Calu3 (cell line): ENCODE measurements at regions of chr3 and their contacts with region 1.

Region 1: GRCh38 chr3:139460076-139460475 is 16.2 kb downstream of the RBP2 start:
- DNase-seq: no peak
- H3K4me3 Mint-ChIP-seq: no peak overlapping the region
- H3K27ac Mint-ChIP-seq: no peak overlapping the region
- H3K4me1 Mint-ChIP-seq: peaks cover 37% of the 10 kb centered on the region
- H3K27me3 Mint-ChIP-seq: no peaks in the 10 kb centered on the region
- CTCF ChIP-seq: no peak

Region 2: DNA sequence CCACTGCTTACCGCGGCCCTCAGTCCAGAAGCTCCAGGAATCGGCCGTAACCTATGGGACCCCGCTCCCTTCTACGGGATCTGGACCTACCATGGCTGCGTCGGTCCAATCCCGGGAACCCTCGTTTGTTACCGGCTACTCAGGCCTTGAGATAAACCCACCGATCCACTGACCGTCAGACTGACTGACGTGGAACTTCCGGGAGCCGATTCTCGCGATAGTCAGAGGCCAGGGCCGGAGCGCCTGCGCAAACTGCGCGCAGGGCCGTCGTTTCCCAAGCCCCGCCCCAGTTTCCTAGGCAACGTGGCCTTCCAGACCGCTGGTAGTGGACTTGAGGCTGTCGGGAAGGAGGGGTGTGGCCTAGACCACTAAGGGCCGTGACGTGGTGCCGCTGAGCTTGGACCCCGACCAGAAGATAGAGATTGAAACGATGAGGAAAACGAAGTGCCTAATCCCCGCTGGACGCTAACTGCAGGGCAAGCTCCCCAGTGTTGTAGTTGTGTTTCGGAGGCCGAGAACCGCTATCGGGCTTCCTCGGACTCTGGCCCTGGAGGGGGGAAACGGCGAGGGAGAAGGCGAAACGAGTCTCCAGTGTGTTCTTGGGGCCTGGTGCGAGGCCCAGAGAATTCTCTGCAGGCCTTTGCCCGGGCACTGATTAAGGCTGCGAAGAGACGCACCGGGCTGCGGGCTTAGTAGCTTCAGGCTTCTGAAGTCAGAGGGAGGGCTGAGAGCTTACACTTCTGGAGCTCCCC is 70.4 kb before region 1 on chr3 and contains the start of gene COPB2:
- CTCF ChIA-PET with region 1: no interaction called
- intact Hi-C with region 1: loop called (anchors 5 kb)
- DNase-seq: peak; percentile 100
- H3K4me3 Mint-ChIP-seq: peak within 1 kb of the TSS; percentile 84
- H3K27ac Mint-ChIP-seq: peak within 1 kb of the TSS; percentile 97
- H3K4me1 Mint-ChIP-seq: peaks cover 24% of the 10 kb centered on the region
- H3K27me3 Mint-ChIP-seq: no peaks in the 10 kb centered on the region
- CTCF ChIP-seq: no peak
- total RNA-seq, gene COPB2: 219 and 223 TPM in 2 replicates

Region 3: DNA sequence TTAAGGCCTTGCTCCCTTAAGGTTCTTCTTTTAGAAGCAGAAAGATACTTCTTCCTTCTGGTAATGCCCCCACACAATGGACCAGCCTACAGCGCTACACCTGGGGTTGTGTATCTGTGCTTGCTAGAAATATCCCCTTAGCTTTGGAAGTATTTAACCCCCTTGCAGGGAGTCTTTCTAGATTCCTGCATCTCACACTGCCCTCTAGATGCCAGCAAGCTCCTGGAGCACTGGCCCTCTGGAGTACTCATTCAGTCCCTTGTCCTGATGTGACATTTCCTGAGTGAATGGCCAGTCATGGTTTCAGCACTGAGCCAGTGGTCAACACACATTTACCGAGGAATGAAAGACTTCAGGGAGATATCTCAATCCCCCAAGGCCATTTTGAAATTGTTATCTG is 46.7 kb after region 1 on chr3:
- CTCF ChIA-PET with region 1: no interaction called
- intact Hi-C with region 1: loop called (anchors 2 kb)
- DNase-seq: peak; percentile 31
- H3K4me3 Mint-ChIP-seq: no peak overlapping the region
- H3K27ac Mint-ChIP-seq: no peak overlapping the region
- H3K4me1 Mint-ChIP-seq: peaks cover 32% of the 10 kb centered on the region
- H3K27me3 Mint-ChIP-seq: no peaks in the 10 kb centered on the region
- CTCF ChIP-seq: peak; percentile 32

Region 4: DNA sequence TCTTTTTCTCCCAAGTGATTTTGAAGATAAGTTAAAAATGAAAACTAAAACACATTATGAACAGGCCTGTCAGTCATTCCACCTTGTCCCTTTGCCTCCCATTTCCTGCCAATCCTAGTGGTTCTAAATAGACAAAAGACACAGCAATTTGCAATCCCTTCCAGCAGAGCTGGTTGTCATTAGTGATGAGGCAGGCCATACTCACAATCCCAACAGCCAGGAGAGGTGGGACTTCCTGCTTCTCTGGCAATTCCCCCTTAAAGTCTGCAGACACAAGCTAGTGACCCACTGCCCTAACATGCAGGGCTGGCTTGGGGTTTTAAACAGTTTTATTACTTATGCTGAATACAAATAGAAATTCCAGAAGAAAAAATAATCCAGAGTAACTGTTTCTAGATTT is 117.8 kb after region 1 on chr3:
- CTCF ChIA-PET with region 1: no interaction called
- intact Hi-C with region 1: no loop called
- DNase-seq: no peak
- H3K4me3 Mint-ChIP-seq: no peak overlapping the region
- H3K27ac Mint-ChIP-seq: no peak overlapping the region
- H3K4me1 Mint-ChIP-seq: no peaks in the 10 kb centered on the region
- H3K27me3 Mint-ChIP-seq: no peaks in the 10 kb centered on the region
- CTCF ChIP-seq: no peak

Region 5: DNA sequence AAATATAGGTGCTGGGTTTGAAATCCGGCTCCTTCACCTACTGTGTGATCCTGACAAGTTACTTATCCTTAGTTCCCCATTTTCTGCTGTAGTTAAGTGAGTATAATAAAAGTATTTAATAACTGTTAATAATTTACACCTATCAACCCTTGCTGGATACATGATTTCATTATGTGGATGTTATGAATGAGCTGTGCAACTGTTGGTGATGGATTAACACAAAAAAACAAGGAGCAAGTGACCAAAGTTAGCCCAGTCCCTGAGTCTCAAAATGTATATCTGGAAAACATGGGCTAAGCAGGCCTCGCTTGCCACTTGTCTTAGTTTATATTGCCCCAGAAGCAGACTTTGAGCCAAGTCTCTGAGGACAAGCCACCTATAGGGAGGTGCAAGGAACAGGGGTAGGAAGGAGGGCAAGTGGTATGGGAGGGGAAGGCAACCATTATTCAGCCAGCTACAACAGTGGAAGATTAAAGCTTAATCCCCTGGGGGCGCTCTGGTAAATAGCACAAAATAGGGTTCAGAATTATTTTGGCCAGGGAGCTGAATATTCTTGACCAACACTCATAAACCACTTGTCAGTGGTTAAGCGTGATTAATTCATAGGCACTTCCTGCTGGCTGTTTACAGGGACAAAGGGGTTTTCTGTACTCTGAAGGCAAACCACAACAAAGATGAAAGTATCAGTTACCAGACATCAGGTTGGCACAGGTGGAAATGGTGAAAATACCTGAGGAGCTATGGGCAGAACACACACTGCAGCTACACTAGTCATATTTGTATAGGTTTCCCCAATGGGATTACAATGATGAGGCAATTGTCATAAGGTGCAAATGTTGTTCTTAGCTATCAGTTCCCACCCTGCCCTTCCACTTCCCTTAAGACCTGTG is 1294.0 kb after region 1 on chr3:
- CTCF ChIA-PET with region 1: no interaction called
- intact Hi-C with region 1: loop called (anchors 2 kb)
- DNase-seq: peak; percentile 54
- H3K4me3 Mint-ChIP-seq: no peak overlapping the region
- H3K27ac Mint-ChIP-seq: peak overlapping the region; percentile 18
- H3K4me1 Mint-ChIP-seq: peaks cover 27% of the 10 kb centered on the region
- H3K27me3 Mint-ChIP-seq: peaks cover 43% of the 10 kb centered on the region
- CTCF ChIP-seq: no peak